Posterior vena cava (tissue), 2 donors: ENCODE measurements at regions of chr1 and their contacts with region 1.

Region 1: DNA sequence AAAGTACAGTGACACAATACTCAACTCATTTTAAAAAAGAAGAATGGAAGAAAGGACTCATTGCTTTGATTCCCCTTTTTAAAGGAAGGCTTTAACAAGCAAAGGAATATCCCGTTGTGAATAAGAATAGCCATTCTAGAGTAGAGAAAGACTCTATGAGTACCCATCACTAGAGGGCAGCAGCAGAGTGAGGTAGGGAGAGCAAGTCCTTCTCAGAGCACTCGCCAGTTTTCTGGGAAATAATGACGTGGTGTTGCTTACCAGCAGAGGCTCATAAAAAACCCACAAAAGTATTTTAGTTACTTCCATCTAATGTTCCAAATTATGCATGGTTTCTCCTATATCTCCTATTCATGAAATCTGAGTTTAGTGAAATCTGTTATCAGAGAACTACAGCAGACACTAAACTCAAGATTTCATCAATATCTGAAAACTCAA is 74.6 kb downstream of the USP24 start:
- DNase-seq: no peak

Region 2: DNA sequence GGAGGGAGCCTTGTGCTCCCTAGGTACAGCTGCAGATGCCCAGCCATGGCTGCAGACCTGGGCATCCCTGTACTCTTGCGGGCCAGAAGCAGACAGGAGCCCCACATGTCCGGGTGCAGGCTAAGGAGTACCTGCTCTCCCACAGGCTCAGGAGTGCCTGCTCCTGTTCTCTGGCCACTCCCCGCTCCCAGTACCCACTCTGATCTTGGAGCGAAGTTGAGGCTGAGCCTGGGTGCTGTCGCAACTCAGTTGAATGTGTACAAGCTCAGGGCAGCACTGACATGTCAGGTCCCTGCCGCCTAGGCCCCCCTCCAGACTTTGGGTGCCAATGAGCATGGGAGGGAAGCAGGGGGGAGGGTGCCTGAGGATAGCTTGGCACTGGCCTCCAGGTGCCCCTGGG is 771.9 kb after region 1 on chr1:
- intact Hi-C with region 1: loop called in 1 of 2 experiments (anchors 5 kb)
- DNase-seq: no peak